ENCODE measurements at regions of chr6 and their contacts with region 1.

Region 1: DNA sequence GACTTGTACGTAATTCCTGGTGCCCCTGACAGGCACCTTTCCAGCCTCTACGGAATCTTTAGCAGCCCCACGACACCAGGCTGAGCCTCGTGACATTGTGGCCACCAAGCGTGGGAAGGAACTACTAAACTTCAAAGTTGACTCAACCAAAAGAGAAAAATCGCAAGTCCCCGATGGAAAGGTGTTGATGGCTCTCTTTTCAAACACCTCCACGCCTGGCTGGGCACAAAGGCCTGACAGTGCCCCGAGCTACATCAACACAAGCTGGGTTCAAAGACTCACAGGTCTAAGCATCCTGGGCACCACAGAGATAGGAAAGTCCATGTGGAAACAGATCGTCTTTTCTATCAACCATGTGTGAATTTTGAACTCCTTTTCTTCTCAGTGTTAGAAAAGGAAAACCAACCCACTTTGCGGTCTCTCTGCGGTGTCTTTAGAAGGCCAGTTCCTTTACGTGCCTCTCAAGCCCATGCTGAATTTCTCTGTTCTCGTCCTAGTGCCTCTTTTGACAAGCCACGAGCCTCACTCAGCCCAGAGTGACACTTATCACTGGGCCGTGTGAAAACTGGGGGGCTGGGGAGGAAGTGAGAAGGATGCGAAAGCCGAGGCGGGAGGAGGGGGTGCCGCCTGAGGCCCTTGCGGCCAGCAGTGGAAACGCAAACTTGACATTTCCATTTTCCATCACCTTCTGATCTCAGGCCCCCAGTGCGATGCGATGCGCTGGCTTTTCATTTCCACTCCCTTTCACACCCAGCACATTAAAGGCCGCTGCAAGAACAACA is 59.4 kb downstream of the GFOD1 start:
- DNase-seq: peak; percentile 98
- ATAC-seq: peak; percentile 73
- H3K4me3 ChIP-seq: peak overlapping the region; percentile 22; the same call in 1 of the 2 replicates
- H3K27ac ChIP-seq: peak overlapping the region; percentile 99
- H3K4me1 ChIP-seq: peaks cover 76% of the 10 kb centered on the region
- H3K27me3 ChIP-seq: no peaks in the 10 kb centered on the region
- CTCF ChIP-seq: peak; percentile 38 to 68 (median 41); a peak in 5 of 6 replicates
- EP300 ChIP-seq: peak; percentile 79 to 91
- POLR2A ChIP-seq: peak; percentile 60
- RAD21 ChIP-seq: peak; percentile 57

Region 2: GRCh38 chr6:13355043-13355951 is 72.7 kb before region 1 on chr6:
- CTCF ChIA-PET with region 1: interaction called, 40 read pairs
- POLR2A ChIA-PET with region 1: interaction called, 31 read pairs
- RAD21 ChIA-PET with region 1: interaction called, 126 read pairs
- SMC1A ChIA-PET with region 1: interaction called, 135 read pairs
- in situ Hi-C with region 1: no loop called
- intact Hi-C with region 1: loop called (anchors 1 kb)
- DNase-seq: peak; percentile 66
- ATAC-seq: peak; percentile 79
- H3K4me3 ChIP-seq: peak overlapping the region; percentile 58
- H3K27ac ChIP-seq: peak overlapping the region; percentile 94
- H3K4me1 ChIP-seq: peaks cover 36% of the 10 kb centered on the region
- H3K27me3 ChIP-seq: no peaks in the 10 kb centered on the region
- CTCF ChIP-seq: no peak
- EP300 ChIP-seq: 0 out of 4 replicates have a peak, but pooled peaks of 1 of the 2 experiments have one; percentile 25
- POLR2A ChIP-seq: no peak
- RAD21 ChIP-seq: no peak

Region 3: DNA sequence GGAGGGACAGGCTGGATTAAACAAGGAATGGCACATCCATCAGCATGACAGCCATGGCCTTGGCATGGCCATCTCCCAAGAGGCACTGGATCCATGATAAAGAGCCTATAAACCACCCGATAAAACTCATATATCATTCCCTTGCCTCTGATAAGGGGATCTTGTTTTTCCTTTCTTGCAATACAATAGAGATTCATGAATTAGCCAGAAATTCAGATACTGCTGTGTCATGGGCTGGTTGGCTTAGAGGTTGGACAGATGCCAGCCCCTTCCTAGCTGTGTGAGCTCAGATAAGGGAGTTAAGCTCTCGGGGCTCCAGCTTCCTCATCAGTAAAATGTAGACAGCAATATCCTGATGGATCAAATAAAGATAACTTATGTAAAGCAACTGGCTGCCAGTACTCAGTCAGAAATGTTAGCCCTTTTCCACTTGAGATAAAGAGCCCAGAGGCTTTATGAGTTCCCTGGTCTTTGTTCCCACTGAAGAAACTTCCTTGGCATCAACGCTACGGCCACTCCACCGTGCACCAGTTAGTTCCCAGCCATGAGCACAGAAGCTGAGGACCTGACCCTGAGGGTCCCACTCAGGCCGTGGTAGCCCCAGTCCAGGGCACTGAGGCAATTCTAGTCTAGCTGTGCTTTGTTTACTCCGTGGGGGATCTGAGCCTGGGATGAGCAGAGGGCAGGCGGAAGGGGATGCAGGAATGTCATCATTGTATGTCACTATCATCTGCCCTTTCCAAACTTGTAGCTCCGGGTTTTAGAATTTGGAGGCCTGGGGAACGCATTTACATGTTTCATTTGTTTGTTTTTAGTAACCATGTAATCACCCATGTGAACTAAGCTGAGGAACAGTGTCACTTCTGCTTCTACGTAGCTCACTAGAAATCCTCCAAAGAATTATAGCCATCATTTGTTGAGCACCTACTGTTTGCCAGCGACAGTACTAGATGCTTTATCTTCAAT is 32.4 kb before region 1 on chr6:
- CTCF ChIA-PET with region 1: interaction called, 60 read pairs
- POLR2A ChIA-PET with region 1: interaction called, 96 read pairs
- RAD21 ChIA-PET with region 1: interaction called, 109 read pairs
- SMC1A ChIA-PET with region 1: interaction called, 240 read pairs
- in situ Hi-C with region 1: no loop called
- intact Hi-C with region 1: loop called (anchors 1 kb)
- DNase-seq: no peak
- ATAC-seq: peak; percentile 65
- H3K4me3 ChIP-seq: no peak overlapping the region; the same call in 1 of the 2 replicates
- H3K27ac ChIP-seq: peak overlapping the region; percentile 76
- H3K4me1 ChIP-seq: peaks cover 38% of the 10 kb centered on the region
- H3K27me3 ChIP-seq: no peaks in the 10 kb centered on the region
- CTCF ChIP-seq: no peak
- EP300 ChIP-seq: 0 out of 4 replicates have a peak, but pooled peaks of 1 of the 2 experiments have one; percentile 45
- POLR2A ChIP-seq: no peak
- RAD21 ChIP-seq: no peak

Region 4: GRCh38 chr6:13454286-13455221 is 26.6 kb after region 1 on chr6:
- CTCF ChIA-PET with region 1: interaction called, 75 read pairs
- POLR2A ChIA-PET with region 1: interaction called, 19 read pairs
- RAD21 ChIA-PET with region 1: interaction called, 98 read pairs
- SMC1A ChIA-PET with region 1: interaction called, 179 read pairs
- in situ Hi-C with region 1: no loop called
- intact Hi-C with region 1: loop called (anchors 1 kb)
- DNase-seq: peak; percentile 56
- ATAC-seq: peak; percentile 74
- H3K4me3 ChIP-seq: no peak overlapping the region
- H3K27ac ChIP-seq: peak overlapping the region; percentile 71
- H3K4me1 ChIP-seq: peaks cover 48% of the 10 kb centered on the region
- H3K27me3 ChIP-seq: no peaks in the 10 kb centered on the region
- CTCF ChIP-seq: peak; percentile 27 to 58 (median 33); a peak in 3 of 6 replicates
- EP300 ChIP-seq: no peak
- POLR2A ChIP-seq: peak; percentile 51
- RAD21 ChIP-seq: peak; percentile 64

Region 5: GRCh38 chr6:13487122-13488014 is 59.4 kb after region 1 on chr6 and contains the start of gene GFOD1:
- CTCF ChIA-PET with region 1: interaction called, 44 read pairs
- POLR2A ChIA-PET with region 1: interaction called, 68 read pairs
- RAD21 ChIA-PET with region 1: interaction called, 193 read pairs
- SMC1A ChIA-PET with region 1: interaction called, 181 read pairs
- in situ Hi-C with region 1: no loop called
- intact Hi-C with region 1: loop called (anchors 1 kb)
- DNase-seq: no peak
- ATAC-seq: peak; percentile 80
- H3K4me3 ChIP-seq: peak within 1 kb of the TSS; percentile 100
- H3K27ac ChIP-seq: peak within 1 kb of the TSS; percentile 69
- H3K4me1 ChIP-seq: peaks cover 15% of the 10 kb centered on the region
- H3K27me3 ChIP-seq: no peaks in the 10 kb centered on the region
- CTCF ChIP-seq: no peak
- EP300 ChIP-seq: no peak
- POLR2A ChIP-seq: peak; percentile 86
- RAD21 ChIP-seq: no peak
- polyA plus RNA-seq, gene GFOD1: 6.5 to 7.9 TPM

Region 6: DNA sequence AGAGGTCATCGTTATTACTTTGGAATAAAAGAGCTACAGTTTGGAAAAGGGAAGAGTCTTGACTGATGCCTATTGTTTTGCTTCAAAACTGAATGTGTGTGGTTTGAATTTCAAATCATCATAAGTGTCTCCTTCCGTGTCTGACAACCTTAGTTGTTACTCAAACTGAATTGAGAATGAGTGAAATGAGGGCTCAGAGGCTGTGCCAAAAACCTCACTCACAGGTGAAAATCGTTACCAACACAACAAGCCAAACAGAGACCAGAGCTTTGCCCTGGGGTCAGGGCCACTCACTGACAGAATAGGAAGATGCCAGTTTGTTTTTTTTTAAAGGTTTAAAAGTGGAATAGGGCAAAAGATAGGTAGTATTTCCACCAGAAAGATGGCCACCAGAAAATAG is 131.3 kb after region 1 on chr6:
- CTCF ChIA-PET with region 1: no interaction called
- POLR2A ChIA-PET with region 1: no interaction called
- RAD21 ChIA-PET with region 1: no interaction called
- SMC1A ChIA-PET with region 1: no interaction called
- in situ Hi-C with region 1: no loop called
- intact Hi-C with region 1: no loop called
- DNase-seq: no peak
- ATAC-seq: peak; percentile 42
- H3K4me3 ChIP-seq: no peak overlapping the region
- H3K27ac ChIP-seq: no peak overlapping the region
- H3K4me1 ChIP-seq: no peaks in the 10 kb centered on the region
- H3K27me3 ChIP-seq: no peaks in the 10 kb centered on the region
- CTCF ChIP-seq: no peak
- EP300 ChIP-seq: no peak
- POLR2A ChIP-seq: no peak
- RAD21 ChIP-seq: no peak

Region 7: DNA sequence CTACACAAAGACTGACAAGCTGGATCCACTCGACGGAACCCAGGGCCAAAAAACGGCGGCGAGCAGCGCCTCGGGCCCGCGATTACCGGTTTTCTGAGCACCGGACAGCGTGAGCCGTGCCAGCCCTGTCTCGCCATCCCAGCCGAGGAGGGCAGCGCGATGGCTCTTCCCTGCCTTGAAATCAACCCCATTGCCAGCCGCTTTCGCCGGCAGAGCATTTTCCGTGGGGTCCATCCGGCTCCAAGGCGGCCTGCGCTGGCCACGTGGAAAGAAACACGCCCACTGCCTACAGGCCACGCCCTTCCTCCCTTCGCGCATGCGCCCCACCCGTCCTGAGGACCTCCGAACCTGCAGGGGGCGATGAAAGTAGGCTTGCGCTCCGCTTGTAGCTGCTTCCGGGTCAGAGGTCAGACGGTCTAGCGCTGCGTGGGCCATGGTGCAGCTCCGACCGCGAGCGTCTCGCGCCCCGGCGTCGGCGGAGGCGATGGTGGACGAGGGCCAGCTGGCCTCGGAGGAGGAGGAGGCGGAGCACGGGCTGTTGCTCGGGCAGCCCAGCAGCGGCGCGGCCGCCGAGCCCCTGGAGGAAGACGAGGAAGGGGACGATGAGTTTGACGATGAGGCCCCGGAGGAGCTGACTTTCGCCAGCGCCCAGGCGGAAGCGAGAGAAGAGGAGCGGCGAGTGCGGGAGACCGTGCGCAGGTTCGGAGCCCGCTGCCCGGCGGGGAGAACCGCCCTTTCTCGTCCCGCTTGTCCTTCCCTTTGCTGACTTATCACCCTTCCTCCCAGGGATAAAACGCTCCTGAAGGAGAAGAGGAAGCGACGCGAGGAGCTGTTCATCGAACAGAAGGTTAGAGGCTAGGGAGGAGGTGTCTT is 187.2 kb after region 1 on chr6 and contains the start of gene NOL7:
- CTCF ChIA-PET with region 1: interaction called, 4 read pairs
- POLR2A ChIA-PET with region 1: interaction called, 3 read pairs
- RAD21 ChIA-PET with region 1: interaction called, 5 read pairs
- SMC1A ChIA-PET with region 1: interaction called, 4 read pairs
- in situ Hi-C with region 1: no loop called
- intact Hi-C with region 1: loop called (anchors 2 kb)
- DNase-seq: peak; percentile 95
- ATAC-seq: peak; percentile 91
- H3K4me3 ChIP-seq: peak within 1 kb of the TSS; percentile 94
- H3K27ac ChIP-seq: peak within 1 kb of the TSS; percentile 96
- H3K4me1 ChIP-seq: peaks cover 17% of the 10 kb centered on the region
- H3K27me3 ChIP-seq: no peaks in the 10 kb centered on the region
- CTCF ChIP-seq: peak; percentile 96 to 99 (median 98); a peak in 5 of 6 replicates
- EP300 ChIP-seq: no peak
- POLR2A ChIP-seq: peak; percentile 99
- RAD21 ChIP-seq: no peak
- polyA plus RNA-seq, gene NOL7: 12.2 to 31.2 TPM

Measured in GM12878 (cell line).